GM12878 (cell line): ENCODE measurements at regions of chr14 and their contacts with region 1.

Region 1: DNA sequence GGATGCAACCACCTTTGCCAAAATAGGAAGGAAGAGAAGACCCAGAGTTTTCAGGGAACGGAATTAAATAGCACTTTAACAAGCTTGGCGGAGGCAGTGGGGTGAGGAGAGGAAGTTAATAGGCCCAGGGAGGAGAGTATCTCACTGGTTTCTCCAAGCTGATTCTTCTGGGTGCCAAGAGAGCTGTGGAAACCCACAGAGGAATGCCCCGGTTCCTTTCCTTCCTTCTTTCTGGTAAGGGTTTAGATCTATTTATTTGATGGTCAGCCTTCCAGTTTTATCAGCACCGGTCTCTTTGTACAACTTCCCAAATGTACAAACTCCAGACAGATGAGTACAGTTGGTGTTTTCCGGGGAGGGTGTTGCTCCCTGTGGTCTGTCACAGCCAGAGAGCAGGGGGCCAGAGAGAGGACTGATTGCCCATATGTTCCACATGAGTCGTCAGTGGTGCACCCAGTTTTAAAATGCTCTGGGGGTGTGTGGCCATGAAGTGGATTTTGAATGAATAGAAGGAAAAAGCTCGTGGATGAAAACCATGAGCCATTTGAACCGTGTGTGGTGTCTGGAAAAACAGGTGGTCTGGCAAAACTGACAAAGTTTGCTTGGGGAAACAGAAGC is 26.6 kb downstream of the PRKCH start:
- DNase-seq: no peak
- ATAC-seq: peak; percentile 43
- H3K4me3 ChIP-seq: peak overlapping the region; percentile 29; the same call in 1 of the 2 replicates
- H3K27ac ChIP-seq: peak overlapping the region; percentile 63
- H3K4me1 ChIP-seq: peaks cover 59% of the 10 kb centered on the region
- H3K27me3 ChIP-seq: no peaks in the 10 kb centered on the region
- CTCF ChIP-seq: no peak
- EP300 ChIP-seq: no peak
- POLR2A ChIP-seq: no peak
- RAD21 ChIP-seq: no peak

Region 2: DNA sequence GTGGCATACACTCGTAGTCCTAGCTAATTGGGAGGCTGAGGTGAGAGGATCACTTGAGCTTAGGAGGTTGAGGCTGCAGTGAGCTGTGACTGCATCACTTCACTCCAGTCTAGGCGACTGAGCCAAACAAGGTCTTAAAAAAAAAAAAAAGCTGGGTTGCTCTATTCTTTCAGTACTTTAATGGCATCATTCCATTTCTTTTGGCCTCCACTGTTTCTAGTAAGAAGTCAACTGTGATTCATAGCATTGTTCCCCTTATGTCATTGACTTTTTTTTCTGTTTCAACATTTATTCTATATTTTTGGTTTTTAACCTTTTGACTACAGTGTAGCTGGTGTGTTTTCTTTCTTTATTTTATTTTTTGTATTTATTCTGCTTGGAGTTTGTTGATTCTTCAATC is 43.2 kb before region 1 on chr14:
- CTCF ChIA-PET with region 1: no interaction called
- POLR2A ChIA-PET with region 1: no interaction called
- RAD21 ChIA-PET with region 1: no interaction called
- SMC1A ChIA-PET with region 1: no interaction called
- in situ Hi-C with region 1: no loop called
- intact Hi-C with region 1: no loop called
- DNase-seq: no peak
- ATAC-seq: no peak
- H3K4me3 ChIP-seq: no peak overlapping the region
- H3K27ac ChIP-seq: no peak overlapping the region
- H3K4me1 ChIP-seq: no peaks in the 10 kb centered on the region; the same call in 1 of the 2 replicates
- H3K27me3 ChIP-seq: no peaks in the 10 kb centered on the region
- CTCF ChIP-seq: no peak
- EP300 ChIP-seq: no peak
- POLR2A ChIP-seq: no peak
- RAD21 ChIP-seq: no peak

Region 3: DNA sequence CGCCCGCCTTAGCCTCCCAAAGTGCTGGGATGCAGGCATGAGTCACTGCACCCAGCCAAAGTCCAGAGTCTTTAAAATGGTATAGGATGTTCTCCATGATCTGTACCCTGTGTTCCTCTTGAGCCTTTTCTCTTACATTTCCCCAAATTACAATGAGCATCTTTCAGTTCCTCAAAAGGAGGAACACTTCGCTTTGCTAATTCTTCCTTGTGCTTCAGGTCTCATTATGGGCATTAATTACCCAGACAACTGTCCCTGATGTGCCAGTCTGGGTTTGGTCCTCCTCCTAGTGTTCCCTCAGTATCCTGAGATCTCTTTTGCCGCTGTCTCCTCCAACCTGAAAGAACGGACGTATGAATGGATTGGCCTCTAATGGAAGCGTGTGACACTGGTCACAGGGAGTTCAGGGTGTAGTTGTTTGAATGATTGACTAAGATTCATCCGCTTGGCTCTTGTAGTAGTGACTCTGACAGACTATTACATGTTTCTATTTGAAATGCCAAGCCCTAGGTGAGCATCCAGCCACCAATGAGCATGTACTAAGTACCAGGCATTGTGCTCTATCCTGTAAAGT is 18.4 kb before region 1 on chr14:
- CTCF ChIA-PET with region 1: interaction called, 5 read pairs
- POLR2A ChIA-PET with region 1: interaction called, 74 read pairs
- RAD21 ChIA-PET with region 1: interaction called, 10 read pairs
- SMC1A ChIA-PET with region 1: interaction called, 48 read pairs
- in situ Hi-C with region 1: no loop called
- intact Hi-C with region 1: no loop called
- DNase-seq: peak; percentile 59
- ATAC-seq: peak; percentile 76
- H3K4me3 ChIP-seq: peak overlapping the region; percentile 39
- H3K27ac ChIP-seq: peak overlapping the region; percentile 82
- H3K4me1 ChIP-seq: peaks cover 25% of the 10 kb centered on the region
- H3K27me3 ChIP-seq: no peaks in the 10 kb centered on the region
- CTCF ChIP-seq: no peak
- EP300 ChIP-seq: peak in 1 of 2 experiments; percentile 88; a peak in 2 of 4 replicates
- POLR2A ChIP-seq: no peak
- RAD21 ChIP-seq: no peak

Region 4: DNA sequence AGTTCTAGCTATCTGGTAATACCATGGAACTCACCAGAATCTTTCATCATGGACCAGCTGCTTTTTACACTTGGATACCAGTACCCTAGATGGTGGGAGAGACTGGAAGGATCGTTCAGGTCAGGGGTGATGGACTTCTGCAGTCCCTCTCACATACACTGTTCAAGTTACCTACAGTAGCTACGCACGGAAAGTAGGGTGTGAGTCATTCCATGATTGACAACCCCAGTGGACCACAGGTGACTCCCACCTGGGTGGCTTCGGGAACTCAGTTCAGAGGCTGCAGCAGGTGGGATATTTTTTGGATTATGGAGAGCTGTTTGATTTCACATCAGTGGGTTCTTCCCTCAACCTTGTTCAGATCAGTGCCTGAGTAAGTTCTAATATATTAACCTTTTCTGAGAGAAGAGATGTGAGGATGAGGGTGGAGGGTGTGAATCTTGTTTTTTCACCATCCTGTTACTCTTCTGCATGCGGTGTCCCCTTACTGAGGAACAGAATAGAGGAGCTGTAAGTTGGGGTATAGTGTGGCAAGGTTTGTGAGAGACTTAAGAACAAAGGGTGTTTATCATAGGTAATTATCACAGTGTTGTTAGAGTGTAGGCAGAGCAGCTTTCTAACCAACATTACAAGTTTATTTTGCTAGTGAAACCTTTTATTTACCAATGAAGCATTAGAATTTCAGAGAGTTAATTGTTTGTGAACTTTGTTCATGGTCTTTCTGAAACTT is 13.0 kb after region 1 on chr14:
- CTCF ChIA-PET with region 1: interaction called, 7 read pairs
- POLR2A ChIA-PET with region 1: interaction called, 7 read pairs
- RAD21 ChIA-PET with region 1: interaction called, 8 read pairs
- SMC1A ChIA-PET with region 1: interaction called, 34 read pairs
- in situ Hi-C with region 1: no loop called
- intact Hi-C with region 1: no loop called
- DNase-seq: no peak
- ATAC-seq: peak; percentile 42
- H3K4me3 ChIP-seq: no peak overlapping the region
- H3K27ac ChIP-seq: no peak overlapping the region
- H3K4me1 ChIP-seq: peaks cover 21% of the 10 kb centered on the region
- H3K27me3 ChIP-seq: no peaks in the 10 kb centered on the region
- CTCF ChIP-seq: no peak
- EP300 ChIP-seq: no peak
- POLR2A ChIP-seq: no peak
- RAD21 ChIP-seq: no peak

Region 5: GRCh38 chr14:61368114-61368726 is 20.3 kb after region 1 on chr14:
- CTCF ChIA-PET with region 1: interaction called, 6 read pairs
- POLR2A ChIA-PET with region 1: interaction called, 3 read pairs
- RAD21 ChIA-PET with region 1: interaction called, 8 read pairs
- SMC1A ChIA-PET with region 1: interaction called, 12 read pairs
- in situ Hi-C with region 1: no loop called
- intact Hi-C with region 1: no loop called
- DNase-seq: no peak
- ATAC-seq: 0 out of 3 replicates have a peak, but pooled peaks have one; percentile 9
- H3K4me3 ChIP-seq: no peak overlapping the region
- H3K27ac ChIP-seq: peak overlapping the region; percentile 36
- H3K4me1 ChIP-seq: peaks cover 46% of the 10 kb centered on the region
- H3K27me3 ChIP-seq: no peaks in the 10 kb centered on the region
- CTCF ChIP-seq: no peak
- EP300 ChIP-seq: no peak
- POLR2A ChIP-seq: no peak
- RAD21 ChIP-seq: no peak

Region 6: DNA sequence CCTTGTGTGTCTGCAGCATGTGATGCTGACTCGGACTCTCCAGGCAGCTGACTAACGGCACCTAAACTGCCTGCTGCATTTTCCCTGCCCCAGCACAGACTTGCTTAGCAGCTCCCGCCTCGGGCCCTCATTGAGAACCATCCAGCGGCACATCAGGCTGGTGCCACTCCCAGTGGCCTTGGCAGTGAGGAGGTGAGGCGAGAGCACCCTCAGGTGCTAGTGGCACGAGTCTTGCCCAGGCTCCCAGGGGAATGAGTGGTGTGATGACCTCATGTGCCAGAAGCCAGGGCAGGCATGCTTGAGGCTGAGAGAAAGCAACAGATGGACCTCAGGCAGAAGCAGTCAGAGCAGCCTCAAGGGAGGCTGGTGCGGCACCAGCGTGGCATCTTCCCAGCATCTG is 33.6 kb after region 1 on chr14:
- CTCF ChIA-PET with region 1: interaction called, 5 read pairs
- POLR2A ChIA-PET with region 1: interaction called, 7 read pairs
- RAD21 ChIA-PET with region 1: interaction called, 22 read pairs
- SMC1A ChIA-PET with region 1: interaction called, 36 read pairs
- in situ Hi-C with region 1: no loop called
- intact Hi-C with region 1: loop called (anchors 5 kb)
- DNase-seq: no peak
- ATAC-seq: peak; percentile 5
- H3K4me3 ChIP-seq: no peak overlapping the region
- H3K27ac ChIP-seq: no peak overlapping the region; the same call in 1 of the 2 replicates
- H3K4me1 ChIP-seq: peaks cover 55% of the 10 kb centered on the region
- H3K27me3 ChIP-seq: no peaks in the 10 kb centered on the region
- CTCF ChIP-seq: no peak
- EP300 ChIP-seq: no peak
- POLR2A ChIP-seq: no peak
- RAD21 ChIP-seq: no peak

Region 7: GRCh38 chr14:61388173-61388975 is 40.4 kb after region 1 on chr14:
- CTCF ChIA-PET with region 1: interaction called, 5 read pairs
- POLR2A ChIA-PET with region 1: interaction called, 17 read pairs
- RAD21 ChIA-PET with region 1: interaction called, 13 read pairs
- SMC1A ChIA-PET with region 1: interaction called, 15 read pairs
- in situ Hi-C with region 1: no loop called
- intact Hi-C with region 1: loop called (anchors 5 kb)
- DNase-seq: peak; percentile 86
- ATAC-seq: peak; percentile 74
- H3K4me3 ChIP-seq: peak overlapping the region; percentile 24; the same call in 1 of the 2 replicates
- H3K27ac ChIP-seq: peak overlapping the region; percentile 99
- H3K4me1 ChIP-seq: peaks cover 76% of the 10 kb centered on the region
- H3K27me3 ChIP-seq: no peaks in the 10 kb centered on the region
- CTCF ChIP-seq: no peak
- EP300 ChIP-seq: peak; percentile 90 to 93
- POLR2A ChIP-seq: peak; percentile 63
- RAD21 ChIP-seq: no peak

Region 8: DNA sequence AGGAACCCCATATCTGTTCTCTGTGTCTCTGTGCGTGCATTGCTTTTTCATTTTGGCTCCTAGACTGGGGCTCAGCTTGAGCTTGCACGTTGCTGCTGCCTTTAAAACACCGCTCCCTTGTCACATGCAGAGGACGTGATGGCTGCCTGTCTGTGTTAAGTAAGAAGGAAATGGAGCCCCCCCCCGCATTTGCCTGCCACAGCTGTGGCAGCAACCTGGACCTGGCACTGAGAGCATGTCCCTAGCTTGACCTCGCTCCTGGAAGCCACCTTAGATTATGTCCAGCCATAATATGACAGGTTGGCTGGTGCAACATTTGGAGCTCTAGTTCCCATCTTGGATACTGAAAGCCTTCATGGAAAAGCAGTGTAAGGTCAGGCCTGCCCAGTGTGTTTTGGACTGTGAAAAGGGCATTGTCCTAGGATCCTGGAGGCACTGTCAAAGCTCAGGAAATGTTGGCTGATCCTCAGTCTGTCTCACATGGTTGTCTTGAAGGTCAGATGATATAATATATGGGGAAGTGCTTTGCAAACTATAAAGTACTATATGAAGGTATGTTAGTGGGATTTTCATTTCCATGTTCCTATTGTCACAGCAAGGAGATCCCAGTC is 47.3 kb after region 1 on chr14:
- CTCF ChIA-PET with region 1: no interaction called
- POLR2A ChIA-PET with region 1: interaction called, 17 read pairs
- RAD21 ChIA-PET with region 1: no interaction called
- SMC1A ChIA-PET with region 1: interaction called, 15 read pairs
- in situ Hi-C with region 1: no loop called
- intact Hi-C with region 1: no loop called
- DNase-seq: no peak
- ATAC-seq: no peak
- H3K4me3 ChIP-seq: no peak overlapping the region
- H3K27ac ChIP-seq: no peak overlapping the region
- H3K4me1 ChIP-seq: peaks cover 22% of the 10 kb centered on the region
- H3K27me3 ChIP-seq: no peaks in the 10 kb centered on the region
- CTCF ChIP-seq: no peak
- EP300 ChIP-seq: no peak
- POLR2A ChIP-seq: no peak
- RAD21 ChIP-seq: no peak

Region 9: DNA sequence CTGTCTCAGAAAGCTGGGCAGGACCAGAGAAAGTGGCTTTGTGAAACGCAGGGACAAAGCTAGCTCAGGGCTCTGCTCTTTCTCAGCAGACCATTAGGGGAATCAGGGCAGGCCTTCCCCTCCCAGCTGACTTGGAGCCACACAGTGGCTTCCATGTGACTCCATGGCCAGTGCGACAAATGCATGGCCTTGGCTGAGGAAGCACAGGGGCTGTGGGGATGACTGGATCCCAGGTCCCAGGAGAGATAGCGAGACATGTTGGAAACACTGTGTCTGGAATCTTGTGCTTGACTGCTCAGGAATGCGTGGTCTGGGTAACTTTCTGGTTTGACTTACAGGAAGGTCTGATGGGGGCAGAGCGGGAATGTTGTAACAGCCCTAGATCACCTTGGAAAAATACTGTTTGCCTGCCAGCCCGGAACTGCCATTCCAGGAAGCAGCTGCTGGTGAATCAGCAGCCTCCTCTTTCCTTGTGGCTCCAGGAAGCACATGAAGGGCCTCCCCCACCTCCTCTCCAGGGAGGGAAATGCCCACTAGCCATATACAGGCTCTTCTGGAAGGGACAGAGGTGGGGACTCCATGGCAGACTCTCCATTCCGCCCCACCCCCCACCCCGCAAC is 213.8 kb after region 1 on chr14:
- CTCF ChIA-PET with region 1: no interaction called
- POLR2A ChIA-PET with region 1: no interaction called
- RAD21 ChIA-PET with region 1: no interaction called
- SMC1A ChIA-PET with region 1: no interaction called
- in situ Hi-C with region 1: no loop called
- intact Hi-C with region 1: no loop called
- DNase-seq: no peak
- ATAC-seq: no peak
- H3K4me3 ChIP-seq: no peak overlapping the region
- H3K27ac ChIP-seq: no peak overlapping the region
- H3K4me1 ChIP-seq: peaks cover 8% of the 10 kb centered on the region; the same call in 1 of the 2 replicates
- H3K27me3 ChIP-seq: no peaks in the 10 kb centered on the region
- CTCF ChIP-seq: no peak
- EP300 ChIP-seq: no peak
- POLR2A ChIP-seq: no peak
- RAD21 ChIP-seq: no peak